HEK293 (cell line): ENCODE measurements at regions of chr12 and their contacts with region 1.

Region 1: GRCh38 chr12:121060149-121061001 is 21.3 kb upstream of the OASL start:
- H3K4me3 ChIP-seq: no peak overlapping the region
- H3K27ac ChIP-seq: no peak overlapping the region
- H3K4me1 ChIP-seq: no peaks in the 10 kb centered on the region
- CTCF ChIP-seq: peak; percentile 62; the same call in 1 of the 2 replicates

Region 2: GRCh38 chr12:120999191-121000085 is 60.9 kb before region 1 on chr12:
- CTCF ChIA-PET with region 1: no interaction called
- POLR2A ChIA-PET with region 1: no interaction called
- H3K4me3 ChIP-seq: no peak overlapping the region
- H3K27ac ChIP-seq: no peak overlapping the region
- H3K4me1 ChIP-seq: no peaks in the 10 kb centered on the region
- CTCF ChIP-seq: no peak

Region 3: GRCh38 chr12:121079736-121080272 is 19.4 kb after region 1 on chr12:
- CTCF ChIA-PET with region 1: interaction called, 25 read pairs
- POLR2A ChIA-PET with region 1: no interaction called
- H3K4me3 ChIP-seq: no peak overlapping the region
- H3K27ac ChIP-seq: no peak overlapping the region
- H3K4me1 ChIP-seq: no peaks in the 10 kb centered on the region
- CTCF ChIP-seq: no peak

Region 4: DNA sequence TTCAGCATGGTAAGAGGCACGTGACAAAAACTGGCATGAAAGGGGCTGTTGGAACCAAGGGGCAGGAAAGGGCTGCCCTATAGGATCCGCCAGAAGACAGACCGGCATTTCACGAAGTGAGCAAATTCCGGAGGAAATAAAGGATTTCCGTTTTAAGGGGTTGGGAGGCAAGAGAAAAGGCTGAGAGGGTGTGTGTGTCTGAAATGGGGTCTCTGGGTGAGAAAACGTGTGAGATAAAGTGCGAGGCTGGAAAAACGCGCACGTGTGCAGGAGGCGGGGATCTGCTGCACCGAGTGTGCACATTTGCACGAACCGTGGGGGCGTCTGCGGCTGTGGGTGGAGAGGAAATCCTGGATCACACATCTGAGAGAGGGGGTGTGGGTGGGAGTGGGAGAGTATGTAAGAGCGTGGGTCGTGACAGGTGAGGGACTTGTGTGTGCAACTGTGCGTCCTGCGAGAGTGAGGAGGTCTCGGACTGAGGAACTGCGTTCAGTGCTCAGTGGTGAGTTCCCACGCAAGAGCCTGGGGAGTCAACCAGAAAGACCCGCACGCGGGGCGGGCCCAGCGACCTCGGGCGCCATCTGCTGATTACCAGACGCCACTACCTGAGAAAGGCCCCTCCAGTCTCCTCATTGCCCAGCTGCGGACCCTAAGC is 35.3 kb after region 1 on chr12:
- CTCF ChIA-PET with region 1: interaction called, 26 read pairs
- POLR2A ChIA-PET with region 1: interaction called, 5 read pairs
- H3K4me3 ChIP-seq: peak overlapping the region; percentile 33
- H3K27ac ChIP-seq: no peak overlapping the region
- H3K4me1 ChIP-seq: no peaks in the 10 kb centered on the region
- CTCF ChIP-seq: no peak; the same call in none of the 2 replicates